ENCODE measurements at regions of chr6 and their contacts with region 1.

Region 1: GRCh38 chr6:57172136-57173055 is at the start of gene BAG2:
- DNase-seq: peak; percentile 75 to 91 (median 85)
- ATAC-seq: peak; percentile 91
- H3K4me3 ChIP-seq: peak within 1 kb of the TSS; percentile 57
- H3K4me3 Mint-ChIP-seq: peak within 1 kb of the TSS; percentile 88 to 99 (median 92)
- H3K27ac ChIP-seq: peak within 1 kb of the TSS; percentile 87
- H3K27ac Mint-ChIP-seq: peak within 1 kb of the TSS; percentile 90 to 99 (median 93)
- H3K4me1 ChIP-seq: peaks cover 4 to 12% of the 10 kb centered on the region in 2 donors
- H3K4me1 Mint-ChIP-seq: peaks cover 10 to 61% (median 56%) of the 10 kb centered on the region in 7 donors
- H3K27me3 ChIP-seq: no peaks in the 10 kb centered on the region
- H3K27me3 Mint-ChIP-seq: no peaks in the 10 kb centered on the region
- total RNA-seq, gene BAG2: 3.7 to 8.1 (median 5.1) TPM

Region 2: GRCh38 chr6:56542364-56543331 is 629.7 kb before region 1 on chr6:
- CTCF ChIA-PET with region 1: no interaction called
- POLR2A ChIA-PET with region 1: no interaction called
- intact Hi-C with region 1: loop called in 1 of 2 experiments (anchors 5 kb)
- DNase-seq: peak; percentile 32 to 74 (median 59)
- ATAC-seq: peak; percentile 90
- H3K4me3 ChIP-seq: peak overlapping the region; percentile 69
- H3K4me3 Mint-ChIP-seq: no peak overlapping the region
- H3K27ac ChIP-seq: peak overlapping the region; percentile 38
- H3K27ac Mint-ChIP-seq: no peak overlapping the region
- H3K4me1 ChIP-seq: peaks cover 0 to 8% of the 10 kb centered on the region in 2 donors
- H3K4me1 Mint-ChIP-seq: peaks cover 0 to 2% (median 0%) of the 10 kb centered on the region in 7 donors
- H3K27me3 ChIP-seq: no peaks in the 10 kb centered on the region
- H3K27me3 Mint-ChIP-seq: peaks cover 0 to 3% (median 0%) of the 10 kb centered on the region in 5 donors

Region 3: DNA sequence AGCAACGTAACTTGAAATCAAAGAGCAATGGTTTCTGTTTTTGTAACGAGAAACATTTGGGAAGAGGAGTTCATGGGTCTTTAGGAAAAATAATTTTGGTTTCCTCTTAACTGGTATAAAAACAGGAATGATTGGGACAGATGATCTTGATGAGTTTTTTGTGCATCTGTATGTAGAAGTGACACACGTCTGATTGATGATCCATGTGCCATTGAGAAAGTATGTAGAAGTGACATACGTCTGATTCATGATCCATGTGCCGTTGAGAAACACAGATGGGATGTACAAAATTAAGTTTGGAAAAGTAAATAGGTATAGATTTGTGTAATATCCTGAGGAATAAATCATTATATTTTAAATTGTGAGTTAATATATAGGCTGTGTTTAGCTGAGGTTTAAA is 123.8 kb before region 1 on chr6:
- CTCF ChIA-PET with region 1: no interaction called
- POLR2A ChIA-PET with region 1: interaction called, 4 read pairs
- intact Hi-C with region 1: loop called (anchors 1 kb)
- DNase-seq: no peak
- ATAC-seq: no peak
- H3K4me3 ChIP-seq: no peak overlapping the region
- H3K4me3 Mint-ChIP-seq: peak overlapping the region; percentile 46 to 84 (median 68)
- H3K27ac ChIP-seq: no peak overlapping the region
- H3K27ac Mint-ChIP-seq: peak overlapping the region in 6 of 9 donors; percentile 14 to 75 (median 58)
- H3K4me1 ChIP-seq: peaks cover 0 to 9% of the 10 kb centered on the region in 2 donors
- H3K4me1 Mint-ChIP-seq: peaks cover 21 to 41% (median 32%) of the 10 kb centered on the region in 7 donors
- H3K27me3 ChIP-seq: no peaks in the 10 kb centered on the region
- H3K27me3 Mint-ChIP-seq: peaks cover 0 to 24% (median 0%) of the 10 kb centered on the region in 5 donors

Region 4: DNA sequence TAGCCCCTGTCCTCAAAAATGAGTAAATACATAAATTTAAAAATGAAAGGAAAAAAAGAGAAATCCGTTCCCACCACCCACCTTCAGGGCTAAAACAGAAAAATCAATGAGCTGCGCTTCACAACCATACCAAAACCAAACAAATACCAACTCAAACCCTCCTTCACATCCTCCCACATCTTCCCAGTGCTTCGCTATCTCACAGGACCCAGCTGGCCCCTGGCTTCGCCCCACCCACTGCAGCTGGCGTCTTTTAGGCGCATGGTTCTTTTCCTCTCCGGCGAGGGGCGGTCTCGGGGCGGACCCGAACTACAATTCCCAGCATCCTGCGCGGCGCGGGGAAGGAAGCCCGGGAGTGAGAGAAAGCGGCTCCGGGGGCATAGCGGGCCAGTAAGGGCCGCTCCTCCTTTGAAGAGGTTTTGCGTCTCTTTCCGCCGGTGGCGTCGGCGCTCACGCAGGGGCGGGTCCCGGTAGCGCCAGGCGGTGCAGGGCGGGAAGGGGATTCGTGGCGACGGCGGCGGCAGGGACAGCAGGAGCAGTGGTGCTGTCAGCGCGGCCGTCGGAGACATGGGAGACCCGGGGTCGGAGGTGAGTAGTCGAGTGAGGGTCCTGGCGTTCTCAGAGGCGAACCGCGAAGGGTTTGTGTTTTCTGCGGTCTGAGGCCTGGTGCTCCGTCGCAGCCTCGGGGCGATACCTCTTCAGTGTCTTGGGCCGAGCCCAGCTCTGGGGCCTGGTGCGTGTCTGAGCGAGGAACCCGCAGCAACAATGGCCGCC is 82.5 kb before region 1 on chr6 and contains the start of gene ZNF451:
- CTCF ChIA-PET with region 1: no interaction called
- POLR2A ChIA-PET with region 1: interaction called, 3 read pairs
- intact Hi-C with region 1: loop called (anchors 1 kb)
- DNase-seq: peak; percentile 88 to 97 (median 94)
- ATAC-seq: peak; percentile 96
- H3K4me3 ChIP-seq: peak within 1 kb of the TSS; percentile 64
- H3K4me3 Mint-ChIP-seq: peak within 1 kb of the TSS; percentile 85 to 94 (median 90)
- H3K27ac ChIP-seq: peak within 1 kb of the TSS; percentile 78
- H3K27ac Mint-ChIP-seq: peak within 1 kb of the TSS; percentile 79 to 94 (median 90)
- H3K4me1 ChIP-seq: peaks cover 24% of the 10 kb centered on the region in 2 donors
- H3K4me1 Mint-ChIP-seq: peaks cover 22 to 44% (median 34%) of the 10 kb centered on the region in 7 donors
- H3K27me3 ChIP-seq: no peaks in the 10 kb centered on the region
- H3K27me3 Mint-ChIP-seq: no peaks in the 10 kb centered on the region
- total RNA-seq, gene ZNF451: 63.4 to 116 (median 96.6) TPM

Region 5: GRCh38 chr6:57147955-57148858 is 24.2 kb before region 1 on chr6:
- CTCF ChIA-PET with region 1: no interaction called
- POLR2A ChIA-PET with region 1: no interaction called
- intact Hi-C with region 1: no loop called
- DNase-seq: no peak
- ATAC-seq: no peak
- H3K4me3 ChIP-seq: no peak overlapping the region
- H3K4me3 Mint-ChIP-seq: peak overlapping the region in 2 of 10 donors; percentile 12 to 59
- H3K27ac ChIP-seq: no peak overlapping the region
- H3K27ac Mint-ChIP-seq: peak overlapping the region in 3 of 9 donors; percentile 55 to 79 (median 61)
- H3K4me1 ChIP-seq: no peaks in the 10 kb centered on the region
- H3K4me1 Mint-ChIP-seq: peaks cover 8 to 23% (median 13%) of the 10 kb centered on the region in 7 donors
- H3K27me3 ChIP-seq: no peaks in the 10 kb centered on the region
- H3K27me3 Mint-ChIP-seq: no peaks in the 10 kb centered on the region

Region 6: GRCh38 chr6:57190140-57190539 is 17.7 kb after region 1 on chr6:
- CTCF ChIA-PET with region 1: interaction called, 3 read pairs
- POLR2A ChIA-PET with region 1: interaction called, 3 read pairs
- intact Hi-C with region 1: loop called in 1 of 2 experiments (anchors 2 kb)
- DNase-seq: peak in 3 of 9 donors; percentile 6 to 15 (median 14)
- ATAC-seq: no peak
- H3K4me3 ChIP-seq: no peak overlapping the region
- H3K4me3 Mint-ChIP-seq: no peak overlapping the region
- H3K27ac ChIP-seq: no peak overlapping the region
- H3K27ac Mint-ChIP-seq: no peak overlapping the region
- H3K4me1 ChIP-seq: no peaks in the 10 kb centered on the region
- H3K4me1 Mint-ChIP-seq: peaks cover 0 to 10% (median 5%) of the 10 kb centered on the region in 7 donors
- H3K27me3 ChIP-seq: no peaks in the 10 kb centered on the region
- H3K27me3 Mint-ChIP-seq: no peaks in the 10 kb centered on the region